Ascending aorta (tissue), 2 donors: ENCODE measurements at regions of chr16 and their contacts with region 1.

Region 1: GRCh38 chr16:73068541-73069401 is 20.8 kb upstream of the ZFHX3 start:
- DNase-seq: peak; percentile 92 to 97
- H3K4me3 ChIP-seq: peak overlapping the region; percentile 27 to 50
- H3K27ac ChIP-seq: peak overlapping the region; percentile 98 to 99
- H3K4me1 ChIP-seq: peaks cover 23 to 51% of the 10 kb centered on the region in 2 donors
- H3K27me3 ChIP-seq: no peaks in the 10 kb centered on the region
- CTCF ChIP-seq: peak in 1 of 3 experiments; percentile 2

Region 2: DNA sequence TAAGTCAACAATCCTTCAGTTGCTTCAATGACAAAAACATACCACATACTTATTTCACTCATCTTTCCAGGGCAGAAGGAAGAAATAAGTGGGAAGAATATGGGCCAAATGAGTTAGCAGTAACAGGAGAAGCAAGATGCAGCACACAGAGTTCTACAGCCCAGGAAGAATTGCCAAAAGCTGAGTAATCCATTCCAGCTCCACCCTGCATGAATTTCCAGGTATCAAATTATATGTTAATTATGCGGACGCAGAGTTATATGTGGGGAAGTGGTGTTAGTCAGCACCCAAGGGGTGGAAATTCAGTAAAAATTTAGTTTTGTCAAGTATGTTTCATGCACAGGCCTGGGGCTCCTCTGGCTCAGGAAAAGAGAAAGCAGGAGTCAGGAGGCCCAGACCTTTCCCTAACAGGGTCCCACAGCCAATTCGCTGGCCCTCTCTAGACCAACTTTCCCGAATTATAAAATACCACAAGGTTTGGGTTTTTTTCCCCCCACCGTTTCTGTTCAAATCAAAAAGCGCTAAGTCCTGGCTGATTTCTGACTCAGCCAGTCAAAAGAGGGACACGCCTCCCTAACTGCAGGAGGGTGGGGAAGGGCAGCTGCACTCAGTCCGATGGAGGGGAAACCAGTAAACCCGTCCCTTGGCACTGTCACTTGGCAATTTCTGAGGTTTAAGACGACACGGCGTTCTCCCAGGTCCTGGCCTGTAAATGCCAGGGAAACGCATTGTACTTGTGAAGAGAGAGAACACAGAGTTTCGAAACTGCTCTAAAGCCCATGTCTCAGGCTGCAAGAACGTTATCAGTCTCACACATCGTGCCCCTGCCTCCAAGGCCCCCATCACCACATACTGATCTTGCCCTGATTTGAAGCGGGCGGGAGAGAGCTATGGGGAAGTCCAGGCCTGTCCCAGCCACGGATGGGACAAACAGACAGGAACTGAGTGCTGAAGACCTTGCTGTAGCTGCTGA is 78.9 kb before region 1 on chr16:
- intact Hi-C with region 1: no loop called
- DNase-seq: peak; percentile 74 to 94
- H3K4me3 ChIP-seq: peak overlapping the region; percentile 43 to 55
- H3K27ac ChIP-seq: peak overlapping the region; percentile 92
- H3K4me1 ChIP-seq: peaks cover 24 to 71% of the 10 kb centered on the region in 2 donors
- H3K27me3 ChIP-seq: no peaks in the 10 kb centered on the region
- CTCF ChIP-seq: no peak

Region 3: DNA sequence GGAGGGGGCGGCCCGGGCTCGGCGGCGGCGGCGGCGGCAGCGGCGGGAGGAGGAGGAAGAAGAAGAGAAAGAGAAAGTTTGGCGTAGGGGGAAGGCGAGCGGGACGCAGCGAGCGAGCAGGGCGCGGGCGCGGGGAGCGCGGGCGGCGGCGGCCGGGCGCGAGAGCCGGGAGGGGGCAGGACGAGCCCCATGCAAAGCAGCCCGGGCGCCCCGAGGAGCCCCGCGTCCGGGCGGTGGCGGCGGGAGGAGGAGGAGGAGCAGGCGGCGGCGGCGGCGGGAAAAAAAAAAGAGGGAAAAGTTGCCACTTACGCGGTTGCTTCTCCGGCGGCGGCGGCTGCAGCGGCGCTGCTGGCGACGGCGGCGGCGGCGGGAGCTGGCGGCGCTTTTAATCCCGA is 10.6 kb before region 1 on chr16:
- intact Hi-C with region 1: loop called (anchors 2 kb)
- DNase-seq: peak in 1 of 2 donors; percentile 70
- H3K4me3 ChIP-seq: peak overlapping the region; percentile 85 to 88
- H3K27ac ChIP-seq: peak overlapping the region; percentile 98 to 99
- H3K4me1 ChIP-seq: peaks cover 4 to 19% of the 10 kb centered on the region in 2 donors
- H3K27me3 ChIP-seq: no peaks in the 10 kb centered on the region
- CTCF ChIP-seq: no peak

Region 4: GRCh38 chr16:73143576-73144422 is 75.0 kb after region 1 on chr16:
- intact Hi-C with region 1: loop called (anchors 5 kb)
- DNase-seq: no peak
- H3K4me3 ChIP-seq: peak overlapping the region; percentile 47 to 68
- H3K27ac ChIP-seq: peak overlapping the region; percentile 80 to 89
- H3K4me1 ChIP-seq: peaks cover 0 to 11% of the 10 kb centered on the region in 2 donors
- H3K27me3 ChIP-seq: no peaks in the 10 kb centered on the region
- CTCF ChIP-seq: no peak

Region 5: DNA sequence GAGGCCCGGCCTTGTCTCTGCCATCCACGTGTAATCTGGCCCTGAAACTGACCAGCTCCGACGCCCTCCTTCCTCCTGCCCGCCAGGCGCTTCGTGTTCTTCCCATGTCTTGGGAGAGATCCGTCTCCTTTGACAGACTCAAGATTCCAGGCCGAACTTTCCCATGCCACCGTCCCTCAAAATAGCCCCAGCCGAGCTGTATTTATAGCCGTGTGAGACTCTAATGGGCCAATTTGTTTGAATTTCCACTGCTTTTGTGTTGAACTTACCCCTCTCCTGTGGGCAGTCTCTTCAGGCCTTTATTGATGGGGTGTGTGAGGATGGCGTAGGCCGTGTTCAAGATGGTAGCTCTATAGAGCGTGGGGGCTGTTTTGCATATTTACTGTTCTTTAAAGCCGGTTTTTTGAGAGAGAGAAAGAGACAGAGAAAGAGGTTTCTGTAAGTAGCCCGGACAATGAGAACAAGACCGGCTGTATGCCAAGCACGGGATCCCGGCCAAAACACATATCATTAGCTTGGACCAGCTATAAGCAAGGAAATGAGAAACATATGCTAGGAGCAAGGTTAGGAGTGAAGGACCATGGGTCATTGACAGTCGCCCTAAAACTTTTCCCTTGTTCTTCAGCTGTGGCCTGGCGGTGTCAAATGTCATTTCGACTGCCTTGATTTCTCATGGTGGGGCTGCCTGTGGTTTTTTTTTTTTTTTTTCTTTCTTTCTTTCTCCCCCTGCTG is 103.6 kb after region 1 on chr16:
- intact Hi-C with region 1: loop called (anchors 2 kb)
- DNase-seq: peak in 1 of 2 donors; percentile 86
- H3K4me3 ChIP-seq: peak overlapping the region in 1 of 2 donors; percentile 23
- H3K27ac ChIP-seq: peak overlapping the region; percentile 91 to 94
- H3K4me1 ChIP-seq: peaks cover 3 to 21% of the 10 kb centered on the region in 2 donors
- H3K27me3 ChIP-seq: no peaks in the 10 kb centered on the region
- CTCF ChIP-seq: peak in 1 of 3 experiments; percentile 29